ENCODE measurements at regions of chr5 and their contacts with region 1.

Region 1: GRCh38 chr5:78008356-78008967 is 232.3 kb upstream of the TBCA start:
- DNase-seq: no peak
- ATAC-seq: no peak
- H3K4me3 ChIP-seq: no peak overlapping the region
- H3K27ac ChIP-seq: no peak overlapping the region
- H3K4me1 ChIP-seq: peaks cover 3% of the 10 kb centered on the region
- H3K27me3 ChIP-seq: no peaks in the 10 kb centered on the region

Region 2: GRCh38 chr5:77645158-77645994 is 363.1 kb before region 1 on chr5:
- intact Hi-C with region 1: loop called in 1 of 4 experiments (anchors 10 kb)
- DNase-seq: peak in 2 of 3 donors; percentile 60 to 74
- ATAC-seq: peak; percentile 78 to 86
- H3K4me3 ChIP-seq: peak overlapping the region; percentile 56
- H3K27ac ChIP-seq: no peak overlapping the region
- H3K4me1 ChIP-seq: peaks cover 1% of the 10 kb centered on the region
- H3K27me3 ChIP-seq: no peaks in the 10 kb centered on the region